Transverse colon (tissue), 4 donors: ENCODE measurements at regions of chr6 and their contacts with region 1.

Region 1: GRCh38 chr6:27795697-27796494 is 116.3 kb downstream of the OR2B2 start:
- DNase-seq: no peak
- H3K4me3 ChIP-seq: no peak overlapping the region
- H3K27ac ChIP-seq: peak overlapping the region in 2 of 4 donors; percentile 23 to 26
- H3K4me1 ChIP-seq: peaks cover 0 to 33% (median 17%) of the 10 kb centered on the region in 4 donors
- H3K27me3 ChIP-seq: peaks cover 1% of the 10 kb centered on the region
- CTCF ChIP-seq: peak; percentile 77 to 96 (median 83)
- EP300 ChIP-seq: no peak
- POLR2A ChIP-seq: no peak

Region 2: DNA sequence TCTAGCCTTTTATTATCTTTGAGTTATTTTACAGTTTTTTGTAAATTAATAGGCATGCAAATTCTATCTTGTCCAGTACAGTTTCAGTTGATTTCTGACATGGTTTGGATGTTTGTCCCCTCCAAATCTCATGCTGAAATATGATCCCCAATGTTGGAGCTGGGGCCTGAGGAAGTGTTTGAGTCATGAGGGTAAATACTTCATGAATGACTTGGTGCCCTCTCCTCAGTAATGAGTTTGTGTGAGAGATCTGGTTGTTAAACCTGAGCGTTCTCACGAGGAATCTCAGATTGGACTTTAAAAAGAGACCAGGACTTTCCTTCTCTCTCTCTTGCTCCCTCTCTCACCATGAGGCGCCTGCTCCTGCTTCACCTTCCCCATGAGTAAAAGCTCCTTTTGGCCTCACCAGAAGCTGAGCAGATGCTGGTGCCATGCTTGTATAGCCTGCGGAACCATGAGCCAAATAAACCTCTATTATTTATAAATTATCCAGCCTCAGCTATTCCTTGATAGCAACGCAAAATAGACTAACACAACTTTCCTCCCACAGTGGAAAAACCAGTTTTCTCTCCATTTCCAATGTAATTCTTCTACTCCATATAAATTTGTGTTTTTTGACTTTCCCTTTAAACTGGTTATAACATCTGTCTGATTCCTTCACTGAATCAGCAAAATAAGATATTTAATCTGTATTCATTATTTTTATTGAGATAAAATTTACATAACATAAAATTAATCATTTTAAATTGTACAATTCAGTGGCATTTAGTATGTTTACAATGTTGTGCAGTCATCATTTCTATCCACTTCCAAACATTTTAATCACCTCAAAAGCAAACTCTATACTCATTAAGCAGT is 627.1 kb before region 1 on chr6:
- in situ Hi-C with region 1: no loop called
- intact Hi-C with region 1: loop called (anchors 5 kb)
- DNase-seq: no peak
- H3K4me3 ChIP-seq: no peak overlapping the region
- H3K27ac ChIP-seq: no peak overlapping the region
- H3K4me1 ChIP-seq: no peaks in the 10 kb centered on the region
- H3K27me3 ChIP-seq: no peaks in the 10 kb centered on the region
- CTCF ChIP-seq: no peak
- EP300 ChIP-seq: no peak
- POLR2A ChIP-seq: no peak